ENCODE measurements at regions of chr4 and their contacts with region 1.

Region 1: DNA sequence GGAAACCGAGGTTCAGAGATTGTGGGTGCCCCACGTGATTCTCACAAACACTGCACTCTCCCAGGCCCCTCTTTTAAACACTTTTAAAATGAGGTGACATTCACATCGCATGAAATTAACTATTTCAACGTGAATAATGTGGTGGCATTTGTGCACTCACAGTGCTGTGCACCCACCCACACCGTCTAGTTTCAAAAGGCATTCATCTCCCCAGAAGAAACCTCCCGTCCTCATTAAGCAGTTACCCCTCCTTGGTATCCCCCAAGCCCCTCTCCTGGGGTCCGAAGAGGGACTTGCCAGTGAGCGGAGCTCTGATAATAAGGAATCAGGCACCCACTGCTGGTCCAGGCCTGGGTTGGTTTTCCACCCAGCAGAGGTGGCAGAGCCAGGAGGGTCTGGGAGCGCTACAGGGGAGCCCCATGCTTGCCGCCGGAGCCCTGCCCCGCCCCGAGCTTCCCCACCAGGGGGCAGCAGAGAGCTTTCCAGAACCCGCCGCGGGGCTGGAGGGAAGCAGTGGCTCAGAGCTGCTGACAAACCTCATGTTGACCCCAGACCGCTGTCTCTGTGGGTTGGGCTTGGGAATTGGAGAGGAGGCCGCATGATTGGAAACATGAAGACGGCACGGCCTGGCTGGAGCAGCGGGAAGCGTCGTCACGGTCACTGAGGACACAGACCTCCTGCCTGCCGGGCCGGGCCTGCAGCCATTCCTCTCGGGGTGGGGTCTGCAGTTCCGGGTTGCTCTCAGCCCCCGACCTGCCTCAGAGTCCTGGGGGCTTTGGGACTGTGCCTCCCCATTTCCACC is 27.5 kb upstream of the HTRA3 start:
- DNase-seq: peak; percentile 16
- H3K4me3 ChIP-seq: no peak overlapping the region
- CTCF ChIP-seq: peak; percentile 95

Region 2: DNA sequence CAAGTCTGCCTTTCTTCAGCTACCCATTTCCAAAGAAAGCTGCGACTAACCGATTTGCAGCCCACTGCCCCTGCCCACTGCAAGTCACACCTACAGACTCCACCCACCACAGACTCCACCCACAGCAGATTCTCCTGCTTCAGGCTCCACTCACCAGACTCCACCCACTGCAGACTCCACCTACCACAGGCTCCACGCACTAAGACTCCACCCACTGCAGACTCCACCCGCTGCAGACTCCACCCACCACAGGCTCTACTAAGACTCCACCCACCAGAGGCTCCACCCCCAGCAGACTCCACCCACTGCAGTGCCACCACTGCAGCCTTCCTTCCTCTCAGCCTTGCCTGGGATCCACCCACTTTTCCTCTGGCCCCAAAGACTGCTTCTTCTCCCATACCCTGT is 124.8 kb before region 1 on chr4:
- CTCF ChIA-PET with region 1: no interaction called
- POLR2A ChIA-PET with region 1: no interaction called
- DNase-seq: no peak
- H3K4me3 ChIP-seq: no peak overlapping the region
- CTCF ChIP-seq: no peak

Region 3: DNA sequence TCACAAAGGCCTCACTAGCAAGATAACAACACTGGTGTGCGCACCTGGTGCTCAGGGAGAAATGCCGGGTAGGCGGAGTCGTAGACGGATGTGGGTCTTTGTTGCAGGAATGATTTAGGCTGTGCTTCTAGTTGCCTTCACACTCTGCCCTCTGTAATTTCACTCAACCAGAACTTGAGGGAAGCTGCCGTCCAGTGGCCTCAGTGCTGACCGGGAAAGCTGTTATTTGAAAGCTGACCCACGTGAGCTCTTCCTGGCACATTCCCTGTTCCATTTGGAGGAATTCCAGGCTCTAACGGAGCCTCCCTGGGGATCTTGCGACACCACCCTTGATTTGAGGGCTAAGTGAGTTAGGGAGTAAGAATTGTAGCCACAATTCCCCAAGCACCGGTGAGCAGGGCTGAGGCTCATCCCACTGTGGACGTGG is 27.1 kb before region 1 on chr4:
- CTCF ChIA-PET with region 1: interaction called, 11 read pairs
- POLR2A ChIA-PET with region 1: no interaction called
- DNase-seq: peak; percentile 45
- H3K4me3 ChIP-seq: no peak overlapping the region
- CTCF ChIP-seq: no peak

Region 4: GRCh38 chr4:8252301-8253173 is 10.4 kb after region 1 on chr4:
- CTCF ChIA-PET with region 1: interaction called, 34 read pairs
- POLR2A ChIA-PET with region 1: no interaction called
- DNase-seq: no peak
- H3K4me3 ChIP-seq: no peak overlapping the region
- CTCF ChIP-seq: no peak

Region 5: DNA sequence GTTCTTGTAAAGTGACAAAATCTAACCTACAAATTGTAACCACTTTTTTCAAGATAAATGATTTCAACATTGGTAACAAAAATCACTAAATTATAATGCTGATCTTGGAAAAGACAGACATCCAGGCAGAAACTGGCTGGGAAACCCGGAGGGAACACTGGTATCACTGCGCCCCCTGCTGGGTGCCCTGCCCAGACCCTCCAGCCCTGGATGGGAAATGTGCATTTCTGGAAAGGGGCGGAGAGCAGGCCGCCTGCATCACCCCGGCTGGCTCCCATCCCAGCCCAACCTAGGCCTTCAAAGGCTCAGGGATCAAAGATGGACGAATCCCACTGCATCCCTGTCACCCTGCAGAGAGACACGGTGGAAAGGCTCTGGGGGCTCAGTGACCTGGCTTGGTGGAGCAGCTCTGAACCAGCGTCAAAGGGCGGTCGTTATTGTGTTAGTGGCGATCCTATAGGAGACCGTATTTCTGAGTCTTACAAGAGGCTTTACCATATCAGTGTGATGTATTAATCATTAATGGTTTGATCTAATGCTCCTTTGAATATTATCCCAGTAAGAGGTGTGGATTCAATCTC is 161.2 kb after region 1 on chr4:
- CTCF ChIA-PET with region 1: interaction called, 679 read pairs
- POLR2A ChIA-PET with region 1: no interaction called
- DNase-seq: no peak
- H3K4me3 ChIP-seq: no peak overlapping the region
- CTCF ChIP-seq: peak; percentile 94

Region 6: DNA sequence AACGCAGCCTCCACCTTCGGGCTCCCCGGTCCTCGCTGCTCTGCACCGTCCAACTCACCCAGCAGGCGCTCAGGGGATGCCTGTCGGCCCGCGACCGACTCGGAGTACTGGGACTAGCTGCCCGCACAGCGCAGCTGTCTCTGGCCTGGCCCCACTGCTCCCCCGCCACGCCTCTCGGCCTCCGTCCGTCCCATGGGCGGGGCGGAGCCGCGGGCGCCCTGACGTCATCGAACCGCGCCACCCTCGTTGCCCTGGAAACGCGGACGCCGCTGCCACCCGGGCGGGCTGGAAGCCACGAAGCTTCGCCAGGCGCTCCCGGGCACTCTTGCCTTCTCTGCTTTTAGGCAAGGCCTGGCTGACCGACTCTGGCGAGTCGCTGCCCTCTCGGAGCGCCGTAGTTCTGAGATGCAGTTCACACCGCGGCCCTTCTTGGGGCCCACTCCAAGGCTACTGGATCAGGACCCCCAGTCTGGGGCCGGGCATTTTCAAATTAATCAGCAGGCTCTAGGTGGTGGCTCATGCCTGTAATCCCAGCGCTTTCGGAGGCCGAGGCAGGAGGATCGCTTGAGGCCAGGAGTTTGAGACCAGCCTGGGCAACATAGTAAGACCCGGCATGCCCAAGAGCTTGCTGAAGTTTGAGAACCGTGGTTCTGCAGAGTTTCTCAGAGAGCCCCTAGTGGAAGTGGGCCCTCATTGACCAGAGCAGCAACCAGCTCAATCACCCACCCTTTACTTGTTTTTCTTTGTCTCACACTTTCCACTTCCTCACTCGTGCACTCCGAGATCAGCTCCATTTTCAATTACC is 186.4 kb after region 1 on chr4:
- CTCF ChIA-PET with region 1: interaction called, 26 read pairs
- POLR2A ChIA-PET with region 1: no interaction called
- DNase-seq: no peak
- H3K4me3 ChIP-seq: peak overlapping the region; percentile 88
- CTCF ChIP-seq: peak; percentile 58

Measured in AG04449 (cell line).